Ovary (tissue), 10 donors: ENCODE measurements at regions of chr2 and their contacts with region 1.

Region 1: DNA sequence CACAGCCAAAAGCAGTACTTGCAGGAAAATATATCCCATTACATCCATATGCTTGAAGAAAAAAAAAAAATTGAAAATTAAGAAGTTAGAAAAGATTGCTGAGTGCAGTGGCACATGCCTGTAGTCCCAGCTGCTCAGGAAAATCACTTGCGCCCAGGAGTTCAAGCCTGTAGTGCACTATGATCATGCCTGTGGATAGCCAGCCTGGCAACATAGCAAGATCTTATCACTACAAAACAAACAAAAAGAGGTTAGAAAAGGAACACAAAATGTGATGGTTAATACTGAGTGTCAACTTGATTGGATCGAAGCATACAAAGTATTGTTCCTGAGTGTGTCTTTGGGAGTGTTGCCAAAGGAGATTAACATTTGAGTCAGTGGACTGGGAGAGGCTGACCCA is 361.9 kb downstream of the NYAP2 start:
- DNase-seq: no peak
- H3K4me3 ChIP-seq: no peak overlapping the region
- H3K27ac ChIP-seq: no peak overlapping the region
- H3K4me1 ChIP-seq: peaks cover 1% of the 10 kb centered on the region
- H3K27me3 ChIP-seq: no peaks in the 10 kb centered on the region
- CTCF ChIP-seq: no peak
- EP300 ChIP-seq: no peak
- POLR2A ChIP-seq: no peak

Region 2: DNA sequence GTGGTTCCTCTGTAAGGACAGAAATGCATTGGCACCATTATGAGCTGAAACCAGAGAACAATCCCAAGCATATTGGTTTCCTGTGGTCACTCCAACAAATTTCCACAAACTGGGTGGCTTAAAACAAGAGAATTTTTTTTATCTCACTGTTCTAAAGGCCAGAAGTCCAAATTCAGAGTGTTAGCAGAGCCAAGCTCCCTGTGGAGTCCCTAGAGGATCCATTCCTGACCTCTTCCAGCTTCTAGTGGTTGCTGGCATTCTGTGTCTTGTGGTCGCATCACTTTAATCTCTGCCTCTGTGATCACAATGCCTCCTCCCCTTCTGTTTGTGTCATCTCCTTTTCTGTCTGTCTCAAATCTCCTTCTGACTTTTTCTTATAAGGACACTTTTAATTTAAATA is 18.4 kb after region 1 on chr2:
- intact Hi-C with region 1: no loop called
- DNase-seq: no peak
- H3K4me3 ChIP-seq: no peak overlapping the region
- H3K27ac ChIP-seq: no peak overlapping the region
- H3K4me1 ChIP-seq: no peaks in the 10 kb centered on the region
- H3K27me3 ChIP-seq: no peaks in the 10 kb centered on the region
- CTCF ChIP-seq: no peak
- EP300 ChIP-seq: no peak
- POLR2A ChIP-seq: no peak

Region 3: DNA sequence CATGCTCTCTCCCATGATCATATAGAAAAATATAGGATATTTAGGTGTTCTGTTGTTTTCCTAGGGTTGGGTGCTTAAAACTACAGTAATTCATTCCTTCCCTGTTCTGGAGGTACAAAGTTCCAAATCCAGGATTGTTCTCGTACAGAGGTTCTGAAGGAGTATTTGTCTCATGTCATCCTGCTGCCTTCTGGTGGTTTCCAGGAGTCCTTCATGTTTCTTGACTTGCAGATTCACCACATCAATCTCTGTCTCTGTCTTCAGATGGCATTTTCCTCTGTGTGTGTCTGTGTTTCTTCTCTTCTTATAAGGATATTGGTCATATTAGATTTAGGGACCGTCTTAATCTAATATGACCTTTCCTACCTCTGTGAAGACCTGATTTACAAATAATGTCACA is 36.0 kb after region 1 on chr2:
- intact Hi-C with region 1: loop called in 1 of 4 experiments (anchors 1 kb)
- DNase-seq: peak in 1 of 5 donors; percentile 19
- H3K4me3 ChIP-seq: no peak overlapping the region
- H3K27ac ChIP-seq: no peak overlapping the region
- H3K4me1 ChIP-seq: no peaks in the 10 kb centered on the region
- H3K27me3 ChIP-seq: no peaks in the 10 kb centered on the region
- CTCF ChIP-seq: no peak
- EP300 ChIP-seq: no peak
- POLR2A ChIP-seq: no peak